Heart right ventricle (tissue), 16 donors: ENCODE measurements at regions of chr15 and their contacts with region 1.

Region 1: DNA sequence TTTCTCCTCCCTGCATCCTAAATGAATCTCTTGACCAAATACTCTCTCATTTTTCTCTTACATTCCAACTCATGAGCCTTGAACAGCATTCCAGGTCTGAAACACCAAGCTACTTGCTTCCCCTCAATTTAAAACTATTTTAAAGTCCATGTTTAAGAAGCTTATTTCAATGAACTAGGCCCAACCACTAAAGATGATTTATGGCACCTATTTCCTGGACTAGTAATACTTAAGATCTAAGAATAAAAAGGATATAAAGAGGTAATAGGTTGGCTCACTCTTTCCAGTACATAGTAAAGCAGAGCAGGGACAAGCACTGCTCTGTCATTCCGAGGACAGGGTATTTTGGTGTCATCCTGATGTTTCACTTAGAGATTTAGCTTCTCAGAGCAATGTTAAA is 219.3 kb upstream of the TMCO5A start:
- DNase-seq: no peak
- ATAC-seq: no peak
- H3K4me3 ChIP-seq: no peak overlapping the region
- H3K27ac ChIP-seq: no peak overlapping the region
- H3K4me1 ChIP-seq: no peaks in the 10 kb centered on the region
- H3K27me3 ChIP-seq: no peaks in the 10 kb centered on the region
- CTCF ChIP-seq: no peak

Region 2: GRCh38 chr15:37652646-37653417 is 62.3 kb before region 1 on chr15:
- intact Hi-C with region 1: no loop called
- DNase-seq: no peak
- ATAC-seq: no peak
- H3K4me3 ChIP-seq: no peak overlapping the region
- H3K27ac ChIP-seq: no peak overlapping the region
- H3K4me1 ChIP-seq: no peaks in the 10 kb centered on the region
- H3K27me3 ChIP-seq: no peaks in the 10 kb centered on the region
- CTCF ChIP-seq: no peak

Region 3: DNA sequence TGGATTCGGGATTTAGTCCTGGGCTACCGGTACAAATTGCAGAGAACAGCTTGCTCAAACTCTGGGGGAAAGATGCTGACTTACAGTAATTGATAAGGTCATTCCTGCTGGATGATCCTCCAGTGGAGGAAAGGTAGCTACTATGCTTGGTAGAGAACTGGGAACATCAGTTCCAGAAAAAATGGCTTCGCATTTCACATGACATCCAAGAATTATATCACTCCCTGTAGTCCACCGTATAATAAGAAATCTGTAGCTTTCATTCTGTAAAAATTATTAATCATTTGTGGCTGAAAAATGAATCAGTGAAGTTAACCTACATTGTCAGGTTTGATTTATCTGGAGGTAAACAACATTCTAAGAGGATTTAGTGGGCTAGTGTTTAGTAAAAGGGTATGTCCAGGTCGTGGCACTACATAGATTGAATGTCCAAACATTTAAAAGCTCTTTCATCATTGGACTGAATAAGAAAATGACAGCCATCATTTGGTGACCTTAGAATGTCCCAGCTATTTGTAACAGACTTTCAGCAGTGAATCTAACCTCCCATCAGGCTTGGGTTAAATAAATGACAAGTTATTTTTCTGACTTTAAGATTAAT is 16.1 kb after region 1 on chr15:
- intact Hi-C with region 1: loop called in 1 of 10 experiments (anchors 2 kb)
- DNase-seq: no peak
- ATAC-seq: no peak
- H3K4me3 ChIP-seq: no peak overlapping the region
- H3K27ac ChIP-seq: no peak overlapping the region
- H3K4me1 ChIP-seq: no peaks in the 10 kb centered on the region
- H3K27me3 ChIP-seq: peaks cover 0 to 21% (median 4%) of the 10 kb centered on the region in 7 donors
- CTCF ChIP-seq: no peak